Keratinocyte (primary cell): ENCODE measurements at regions of chr13 and their contacts with region 1.

Region 1: GRCh38 chr13:36346222-36347083 is at the start of gene SPART:
- DNase-seq: no peak
- H3K4me3 ChIP-seq: peak within 1 kb of the TSS; percentile 57 to 92 (median 88)
- H3K27ac ChIP-seq: peak within 1 kb of the TSS; percentile 98
- H3K4me1 ChIP-seq: peaks cover 18% of the 10 kb centered on the region
- H3K27me3 ChIP-seq: no peaks in the 10 kb centered on the region
- CTCF ChIP-seq: peak; percentile 95 to 98 (median 95)
- polyA plus RNA-seq, gene SPART: 27.6 to 40.2 TPM (median 35.5 TPM) in 3 replicates

Region 2: GRCh38 chr13:36395280-36395679 is 48.8 kb after region 1 on chr13:
- dilution Hi-C with region 1: loop called (anchors 5 kb)
- DNase-seq: no peak
- H3K4me3 ChIP-seq: no peak overlapping the region
- H3K27ac ChIP-seq: no peak overlapping the region
- H3K4me1 ChIP-seq: no peaks in the 10 kb centered on the region
- H3K27me3 ChIP-seq: no peaks in the 10 kb centered on the region
- CTCF ChIP-seq: peak in 2 of 3 experiments; percentile 27 to 55